A549 (cell line): ENCODE measurements at regions of chr16 and their contacts with region 1.

Region 1: DNA sequence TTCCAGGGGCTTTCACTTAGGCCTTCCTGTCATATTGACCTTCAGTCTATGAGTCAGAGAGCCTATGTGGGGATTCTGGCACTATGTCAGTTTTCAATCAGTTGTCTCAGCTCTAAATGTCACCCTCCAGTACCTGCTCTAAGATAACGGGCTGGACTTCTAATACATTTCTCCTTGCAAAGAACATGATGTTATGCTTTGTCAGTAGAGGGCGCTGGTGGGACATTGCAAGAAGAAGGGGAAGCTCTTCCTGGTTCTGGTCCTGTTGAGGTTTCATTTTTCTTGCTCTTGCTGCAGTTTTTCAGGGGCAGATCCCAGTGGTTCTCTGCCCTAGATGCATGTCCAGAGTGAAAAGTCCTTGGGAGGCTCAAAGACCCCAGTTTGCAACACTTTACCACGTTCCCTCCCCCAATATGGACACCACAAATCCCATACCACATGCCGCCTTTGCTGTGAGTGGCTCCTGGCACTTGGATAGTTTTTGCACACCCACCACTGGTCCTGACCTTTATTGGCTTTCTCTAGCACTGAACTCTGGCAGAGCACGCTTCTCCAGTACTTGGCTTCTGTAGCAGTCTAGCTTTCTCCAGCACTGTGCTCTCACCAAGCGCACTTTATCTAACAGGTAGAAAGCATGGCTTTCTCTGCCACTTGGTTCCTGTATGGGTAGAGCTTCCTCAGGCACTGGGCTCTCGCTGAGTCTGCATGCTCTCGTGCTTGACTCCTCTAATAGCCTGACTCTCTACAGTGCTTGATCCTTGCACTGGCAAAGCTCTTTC is 49.0 kb downstream of the BCL7C start:
- DNase-seq: peak; percentile 87 to 90
- ATAC-seq: peak; percentile 89 to 97
- H3K4me3 ChIP-seq: no peak overlapping the region
- H3K27ac ChIP-seq: peak overlapping the region; percentile 50 to 58; a peak in 5 of 6 replicates
- H3K4me1 ChIP-seq: peaks cover 11% of the 10 kb centered on the region
- CTCF ChIP-seq: peak; percentile 88
- EP300 ChIP-seq: no peak
- POLR2A ChIP-seq: no peak
- RAD21 ChIP-seq: peak; percentile 84 to 91

Region 2: DNA sequence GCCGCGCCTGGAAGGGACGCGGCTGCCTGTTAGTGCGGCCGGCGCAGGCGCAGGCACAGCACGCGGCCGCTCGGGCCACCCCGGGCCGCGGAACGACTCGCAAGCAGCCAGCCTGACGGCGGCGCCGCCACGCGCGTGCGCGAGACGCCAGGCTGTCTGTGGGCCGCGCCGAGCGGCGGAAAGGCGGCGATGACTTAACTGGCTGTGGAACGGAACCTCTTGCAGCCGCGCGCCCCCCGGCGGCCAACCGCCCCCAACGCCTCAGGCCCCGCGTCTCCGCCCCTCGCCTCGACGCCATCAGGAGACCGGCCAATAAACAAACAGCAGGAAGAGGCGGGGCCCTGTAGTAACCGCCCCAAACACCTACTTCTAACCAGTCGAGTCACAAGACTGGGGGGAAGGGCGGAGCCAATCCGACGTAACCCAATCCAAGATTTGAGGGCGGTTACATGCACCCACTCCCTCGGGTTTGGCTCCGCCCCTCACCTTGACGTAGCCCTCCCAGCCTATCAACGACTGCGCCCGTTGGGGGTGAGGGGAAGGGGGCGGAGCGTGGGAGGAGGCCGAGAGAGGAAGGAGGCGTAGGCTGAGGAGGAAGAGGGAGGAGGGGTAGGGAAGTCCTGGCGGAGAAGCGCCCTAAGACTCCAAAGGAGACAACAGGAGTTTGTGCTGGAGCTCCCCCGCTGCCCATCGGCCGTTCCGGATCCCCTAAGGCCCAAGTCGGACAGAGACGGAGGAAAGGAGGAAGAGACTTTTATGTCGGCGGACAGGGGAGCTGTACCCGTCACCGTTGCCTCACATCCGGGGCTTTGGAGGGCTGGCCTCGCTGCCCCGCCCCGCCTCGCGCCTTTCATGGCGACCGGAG is 186.8 kb before region 1 on chr16 and contains the start of gene FBRS:
- CTCF ChIA-PET with region 1: no interaction called
- POLR2A ChIA-PET with region 1: no interaction called
- DNase-seq: peak; percentile 97 to 100
- ATAC-seq: peak; percentile 83 to 90
- H3K4me3 ChIP-seq: peak within 1 kb of the TSS; percentile 90
- H3K27ac ChIP-seq: peak within 1 kb of the TSS; percentile 87 to 99
- H3K4me1 ChIP-seq: peaks cover 23% of the 10 kb centered on the region
- CTCF ChIP-seq: peak; percentile 88
- EP300 ChIP-seq: no peak
- POLR2A ChIP-seq: peak; percentile 83
- RAD21 ChIP-seq: peak; percentile 51 to 80
- polyA plus RNA-seq, gene FBRS: 5.9 and 8.1 TPM in 2 replicates

Region 3: DNA sequence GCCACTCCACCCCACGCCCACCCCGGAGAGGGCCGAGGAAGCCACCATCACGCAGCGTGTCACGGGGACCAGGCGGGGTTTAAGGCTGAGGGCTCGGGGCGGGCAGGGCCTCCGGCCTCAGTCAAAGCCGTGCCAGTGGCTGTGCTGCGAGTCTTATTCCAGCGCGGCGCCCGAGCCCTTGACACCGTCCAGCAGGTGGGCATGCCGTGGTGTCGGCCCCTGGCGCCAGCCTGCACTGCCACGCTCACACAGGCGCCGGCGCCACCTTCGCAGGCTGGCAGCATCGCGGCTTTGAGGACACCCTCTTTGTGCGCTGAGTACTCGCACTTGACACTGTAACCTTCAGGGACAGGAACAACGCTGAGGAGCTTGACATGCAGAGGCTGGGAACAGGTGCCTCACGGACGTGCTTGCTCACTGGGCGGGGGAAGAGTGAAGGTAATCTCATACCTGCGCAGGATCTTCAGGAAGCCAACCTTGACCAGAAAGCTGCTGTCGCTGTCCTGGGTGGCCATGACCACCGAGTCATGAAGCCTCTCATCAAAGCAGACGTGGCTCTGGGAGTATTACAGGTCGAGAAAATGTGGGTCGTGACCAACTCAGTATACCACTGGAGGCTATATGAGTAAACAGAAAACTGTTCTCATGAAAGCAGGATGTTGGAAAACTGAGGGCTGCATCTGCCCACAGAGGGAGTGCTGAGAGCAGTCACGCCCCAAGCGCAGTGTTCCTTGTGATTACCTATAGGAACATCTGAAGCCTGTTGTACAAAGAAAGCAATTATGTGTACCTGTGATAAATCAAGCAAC is 23.7 kb before region 1 on chr16:
- CTCF ChIA-PET with region 1: interaction called, 17 read pairs
- POLR2A ChIA-PET with region 1: no interaction called
- DNase-seq: no peak
- ATAC-seq: peak; percentile 30 to 45; a peak in 3 of 6 replicates
- H3K4me3 ChIP-seq: no peak overlapping the region
- H3K27ac ChIP-seq: no peak overlapping the region
- H3K4me1 ChIP-seq: no peaks in the 10 kb centered on the region
- CTCF ChIP-seq: no peak
- EP300 ChIP-seq: no peak
- POLR2A ChIP-seq: no peak
- RAD21 ChIP-seq: no peak

Region 4: DNA sequence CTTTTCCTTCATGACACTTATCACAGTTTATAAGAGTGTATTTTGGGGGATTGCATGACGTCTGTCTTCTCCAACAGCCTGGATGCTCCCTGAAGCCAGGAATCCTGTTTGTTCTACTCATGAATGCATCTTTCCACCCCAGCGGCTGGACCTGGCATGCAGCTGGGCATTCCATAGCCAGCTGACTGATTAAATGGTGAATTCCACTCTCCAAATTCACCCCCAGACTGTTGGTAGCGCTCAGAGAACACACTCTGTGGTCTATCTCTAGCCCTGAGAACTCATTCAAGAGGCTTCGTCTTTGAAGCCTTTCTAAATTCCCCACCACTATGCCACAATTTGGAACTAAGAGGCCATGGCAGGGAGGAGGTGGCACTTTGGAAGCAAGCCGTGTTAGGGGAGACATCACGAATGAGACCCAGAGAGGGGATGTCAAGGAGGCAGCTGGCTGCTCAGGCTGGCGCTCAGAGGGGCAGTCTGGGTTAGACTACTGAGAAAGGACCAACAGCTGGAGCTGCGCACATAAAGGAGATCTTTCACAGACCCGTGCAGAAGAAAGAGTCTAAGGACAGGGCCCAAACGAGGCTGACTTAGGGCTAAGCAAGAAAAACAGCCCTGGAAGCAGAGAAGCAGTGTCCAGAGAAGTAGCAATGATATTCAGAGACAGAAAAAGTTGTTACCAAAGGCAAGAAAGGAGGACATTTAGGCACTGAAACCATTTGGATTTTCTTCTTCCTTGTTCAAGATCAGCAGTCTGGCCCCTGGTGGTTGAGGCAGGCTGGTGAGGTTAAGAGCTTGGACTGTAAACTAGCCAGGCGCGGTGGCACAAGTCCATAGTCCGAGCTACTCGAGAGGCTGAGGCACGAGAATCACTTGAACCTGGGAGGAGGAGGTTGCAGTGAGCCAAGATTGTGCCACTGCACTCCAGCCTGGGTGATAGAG is 15.5 kb before region 1 on chr16:
- CTCF ChIA-PET with region 1: interaction called, 40 read pairs
- POLR2A ChIA-PET with region 1: no interaction called
- DNase-seq: peak; percentile 34 to 35
- ATAC-seq: peak in 1 of 2 experiments; percentile 77; a peak in 3 of 6 replicates
- H3K4me3 ChIP-seq: no peak overlapping the region
- H3K27ac ChIP-seq: no peak overlapping the region
- H3K4me1 ChIP-seq: no peaks in the 10 kb centered on the region
- CTCF ChIP-seq: no peak
- EP300 ChIP-seq: no peak
- POLR2A ChIP-seq: no peak
- RAD21 ChIP-seq: no peak

Region 5: DNA sequence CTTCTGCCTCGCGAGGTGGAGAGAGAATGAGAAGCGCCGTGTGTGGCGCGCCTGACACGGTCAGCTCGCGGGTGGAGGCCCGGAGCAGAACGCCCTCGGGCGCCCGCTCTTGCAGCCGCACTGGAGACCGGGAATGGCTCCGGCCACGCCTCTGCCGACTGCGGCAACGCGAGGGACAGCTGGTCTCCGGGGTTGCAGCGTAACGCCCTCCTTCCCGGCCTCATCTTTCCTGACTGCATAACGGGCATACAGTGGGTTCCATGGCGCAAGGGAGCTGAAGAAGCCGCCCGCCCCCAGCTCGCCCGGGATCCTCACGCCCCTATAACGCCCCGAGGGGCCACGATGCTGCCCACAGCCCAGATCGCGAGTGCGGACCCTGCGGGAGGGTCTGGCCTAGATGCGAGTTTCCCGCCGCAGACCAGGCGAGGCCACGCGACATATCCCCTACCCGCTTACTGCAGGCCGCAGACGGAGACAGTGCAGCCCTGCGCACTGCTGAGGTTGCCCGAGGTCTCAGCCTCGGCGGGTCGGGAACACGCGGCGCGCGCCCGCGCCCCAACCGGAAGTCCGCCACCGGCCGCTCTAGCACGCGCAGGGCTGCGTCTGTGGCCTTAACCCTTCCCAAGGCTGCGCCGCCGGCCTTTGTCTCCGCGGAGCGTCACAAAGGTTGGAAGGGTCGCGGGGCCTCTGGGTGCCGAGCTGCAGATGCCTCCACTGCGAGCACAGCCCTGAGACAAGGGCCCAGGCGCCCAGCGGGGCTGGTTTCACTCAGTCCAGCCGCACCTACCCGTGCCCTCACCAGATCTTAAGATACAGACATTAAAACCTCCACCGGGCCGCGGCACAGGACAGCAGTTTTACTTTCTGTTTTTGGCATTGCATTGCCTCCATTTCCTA is 30.2 kb after region 1 on chr16:
- CTCF ChIA-PET with region 1: interaction called, 22 read pairs
- POLR2A ChIA-PET with region 1: interaction called, 13 read pairs
- DNase-seq: peak; percentile 82 to 93
- ATAC-seq: peak; percentile 95 to 98
- H3K4me3 ChIP-seq: peak overlapping the region; percentile 71
- H3K27ac ChIP-seq: peak overlapping the region; percentile 90 to 96
- H3K4me1 ChIP-seq: peaks cover 13% of the 10 kb centered on the region; the same call in 2 of the 3 replicates
- CTCF ChIP-seq: no peak
- EP300 ChIP-seq: no peak
- POLR2A ChIP-seq: peak; percentile 99
- RAD21 ChIP-seq: peak in 1 of 2 experiments; percentile 29; a peak in 1 of 5 replicates

Region 6: DNA sequence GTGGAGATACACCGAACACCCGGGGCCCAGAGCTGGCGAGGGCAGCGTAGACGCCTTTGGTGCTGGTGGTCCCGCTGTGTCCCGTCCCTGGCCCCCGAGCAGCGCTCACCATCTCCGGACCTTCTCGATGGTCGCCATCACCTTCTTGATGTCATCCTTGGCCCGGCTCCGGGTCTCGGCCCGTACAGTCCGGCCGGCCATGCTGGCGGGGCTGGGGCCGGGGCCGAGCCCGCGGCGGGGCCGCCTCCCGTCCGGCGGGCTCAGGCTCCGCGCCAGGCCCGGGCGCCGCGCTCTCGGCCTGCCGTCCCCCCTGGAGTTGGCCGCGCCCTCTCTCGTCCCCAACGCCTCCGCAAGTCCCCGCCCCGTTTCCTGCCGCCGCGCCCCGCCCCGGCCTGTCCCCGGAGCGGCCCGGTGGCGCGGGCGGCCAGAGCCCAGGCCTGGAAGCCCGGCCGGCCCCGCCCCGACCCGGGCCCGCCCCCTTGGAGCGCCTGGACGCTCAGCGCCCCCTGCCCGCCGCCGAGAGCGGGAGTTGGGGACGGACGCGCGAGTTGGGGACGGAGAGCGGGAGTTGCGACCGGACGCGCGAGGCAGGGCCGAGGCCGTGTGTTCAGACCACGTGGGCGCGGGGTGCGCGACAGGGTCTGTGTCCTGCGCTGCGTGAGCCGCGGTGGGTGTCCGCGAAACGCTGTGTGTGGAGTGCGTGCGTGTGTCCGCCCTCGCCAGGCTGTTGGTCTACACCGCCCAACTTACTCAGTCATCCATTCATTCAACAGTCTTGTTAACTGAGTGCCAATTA is 49.1 kb after region 1 on chr16 and contains the start of gene BCL7C:
- CTCF ChIA-PET with region 1: interaction called, 22 read pairs
- POLR2A ChIA-PET with region 1: no interaction called
- DNase-seq: peak; percentile 67 to 93
- ATAC-seq: peak; percentile 86 to 87
- H3K4me3 ChIP-seq: peak within 1 kb of the TSS; percentile 56
- H3K27ac ChIP-seq: peak within 1 kb of the TSS; percentile 79 to 95
- H3K4me1 ChIP-seq: peaks cover 34% of the 10 kb centered on the region
- CTCF ChIP-seq: peak; percentile 67
- EP300 ChIP-seq: no peak
- POLR2A ChIP-seq: peak; percentile 81
- RAD21 ChIP-seq: peak in 1 of 2 experiments; percentile 49; a peak in 2 of 5 replicates
- polyA plus RNA-seq, gene BCL7C: 9.5 and 10.8 TPM in 2 replicates

Region 7: GRCh38 chr16:30934827-30935557 is 90.1 kb after region 1 on chr16:
- CTCF ChIA-PET with region 1: interaction called, 50 read pairs
- POLR2A ChIA-PET with region 1: no interaction called
- DNase-seq: peak; percentile 45 to 72
- ATAC-seq: peak; percentile 57 to 84; a peak in 4 of 6 replicates
- H3K4me3 ChIP-seq: no peak overlapping the region
- H3K27ac ChIP-seq: no peak overlapping the region
- H3K4me1 ChIP-seq: peaks cover 4% of the 10 kb centered on the region; the same call in 1 of the 3 replicates
- CTCF ChIP-seq: peak; percentile 40
- EP300 ChIP-seq: no peak
- POLR2A ChIP-seq: no peak
- RAD21 ChIP-seq: 0 out of 5 replicates have a peak, but pooled peaks have one; percentile 15 to 22

Region 8: DNA sequence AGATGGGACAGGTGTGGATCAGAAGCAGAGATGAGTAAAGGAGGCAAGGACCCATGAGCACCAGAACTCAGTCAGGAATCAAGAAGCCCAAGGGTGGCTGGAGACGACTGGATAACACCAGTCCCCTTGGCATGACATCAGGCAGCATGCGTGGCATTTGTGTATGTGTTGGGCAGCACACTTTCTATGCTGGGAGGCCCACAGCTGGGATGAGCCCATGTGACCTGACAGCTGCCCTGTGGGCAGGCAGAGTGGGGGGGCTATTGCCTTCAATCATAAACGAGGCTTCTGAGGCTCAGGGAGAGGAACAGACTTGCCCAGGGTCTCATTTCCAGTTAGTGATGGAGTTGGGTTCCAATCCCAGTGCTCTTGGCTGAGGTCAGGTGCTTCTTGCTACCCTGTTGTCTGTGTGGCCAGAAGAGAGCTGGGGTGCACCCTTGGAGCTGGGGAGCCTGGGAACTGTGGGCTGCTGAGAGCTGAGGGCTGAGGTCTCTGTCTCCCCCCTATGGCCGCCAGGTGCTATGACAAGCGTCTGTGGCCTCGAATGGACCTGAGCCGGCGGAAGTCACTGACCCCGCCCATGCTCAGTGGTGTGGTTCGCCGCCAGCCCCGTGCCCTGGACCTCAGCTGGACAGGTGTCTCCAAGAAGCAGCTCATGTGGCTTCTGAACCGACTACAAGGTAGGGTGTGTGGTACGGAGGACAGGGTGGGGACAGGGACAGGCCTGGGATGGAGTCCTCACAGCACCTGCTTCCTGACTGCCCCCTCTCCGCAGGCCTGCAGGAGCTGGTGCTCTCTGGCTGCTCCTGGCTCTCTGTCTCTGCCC is 97.0 kb after region 1 on chr16:
- CTCF ChIA-PET with region 1: interaction called, 50 read pairs
- POLR2A ChIA-PET with region 1: interaction called, 3 read pairs
- DNase-seq: peak; percentile 77 to 87
- ATAC-seq: peak; percentile 89 to 96
- H3K4me3 ChIP-seq: no peak overlapping the region
- H3K27ac ChIP-seq: peak overlapping the region; percentile 39 to 73; a peak in 4 of 6 replicates
- H3K4me1 ChIP-seq: peaks cover 19% of the 10 kb centered on the region
- CTCF ChIP-seq: peak; percentile 75
- EP300 ChIP-seq: no peak
- POLR2A ChIP-seq: no peak
- RAD21 ChIP-seq: peak; percentile 77 to 80